ENCODE measurements at regions of chr2 and their contacts with region 1.

Region 1: DNA sequence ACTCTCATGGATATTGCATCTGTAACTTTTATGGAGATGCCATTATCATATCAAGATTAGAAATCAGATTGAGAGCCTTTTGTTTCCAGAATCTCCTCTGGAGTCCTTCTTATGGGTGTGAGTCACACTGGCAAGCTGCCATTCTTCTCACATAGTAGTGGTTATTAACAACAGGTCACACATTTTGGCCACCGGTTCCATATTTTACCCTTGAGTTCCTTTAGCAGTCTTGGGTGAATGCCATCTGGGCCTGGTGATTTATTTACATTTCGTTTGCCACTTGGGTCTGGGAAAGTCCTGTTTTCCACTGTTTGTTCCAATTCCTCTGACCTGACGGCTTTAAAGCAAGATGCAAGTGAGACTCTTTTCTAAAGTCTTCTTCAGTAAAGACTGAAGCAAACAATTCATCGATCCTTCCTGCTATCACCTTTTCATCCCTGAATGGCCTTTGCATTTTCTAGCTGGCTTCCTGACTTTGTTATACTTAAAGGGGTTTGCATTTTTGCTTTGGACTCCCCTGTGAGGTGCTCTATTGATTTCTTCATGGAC is 80.5 kb upstream of the CAVIN2 start:
- DNase-seq: peak; percentile 99
- H3K4me3 ChIP-seq: peak overlapping the region in 1 of 3 experiments; percentile 5
- H3K27ac ChIP-seq: peak overlapping the region; percentile 84
- H3K4me1 ChIP-seq: peaks cover 48% of the 10 kb centered on the region
- H3K27me3 ChIP-seq: no peaks in the 10 kb centered on the region
- CTCF ChIP-seq: no peak
- POLR2A ChIP-seq: peak; percentile 65

Region 2: GRCh38 chr2:191857259-191857805 is 70.1 kb before region 1 on chr2:
- CTCF ChIA-PET with region 1: interaction called, 3 read pairs
- POLR2A ChIA-PET with region 1: interaction called, 4 read pairs
- dilution Hi-C with region 1: no loop called
- intact Hi-C with region 1: loop called (anchors 1 kb)
- DNase-seq: peak; percentile 97
- H3K4me3 ChIP-seq: no peak overlapping the region
- H3K27ac ChIP-seq: peak overlapping the region; percentile 93
- H3K4me1 ChIP-seq: peaks cover 56% of the 10 kb centered on the region
- H3K27me3 ChIP-seq: no peaks in the 10 kb centered on the region
- CTCF ChIP-seq: no peak
- POLR2A ChIP-seq: peak; percentile 74

Region 3: GRCh38 chr2:191878576-191879279 is 48.7 kb before region 1 on chr2:
- CTCF ChIA-PET with region 1: no interaction called
- POLR2A ChIA-PET with region 1: no interaction called
- dilution Hi-C with region 1: no loop called
- intact Hi-C with region 1: loop called (anchors 1 kb)
- DNase-seq: peak; percentile 91
- H3K4me3 ChIP-seq: no peak overlapping the region
- H3K27ac ChIP-seq: peak overlapping the region; percentile 44
- H3K4me1 ChIP-seq: peaks cover 18% of the 10 kb centered on the region
- H3K27me3 ChIP-seq: no peaks in the 10 kb centered on the region
- CTCF ChIP-seq: no peak
- POLR2A ChIP-seq: no peak

Region 4: GRCh38 chr2:191910518-191910917 is 16.9 kb before region 1 on chr2:
- CTCF ChIA-PET with region 1: interaction called, 4 read pairs
- POLR2A ChIA-PET with region 1: no interaction called
- dilution Hi-C with region 1: no loop called
- intact Hi-C with region 1: loop called (anchors 1 kb)
- DNase-seq: peak; percentile 92
- H3K4me3 ChIP-seq: no peak overlapping the region
- H3K27ac ChIP-seq: peak overlapping the region; percentile 36
- H3K4me1 ChIP-seq: peaks cover 34% of the 10 kb centered on the region
- H3K27me3 ChIP-seq: no peaks in the 10 kb centered on the region
- CTCF ChIP-seq: no peak
- POLR2A ChIP-seq: no peak

Region 5: DNA sequence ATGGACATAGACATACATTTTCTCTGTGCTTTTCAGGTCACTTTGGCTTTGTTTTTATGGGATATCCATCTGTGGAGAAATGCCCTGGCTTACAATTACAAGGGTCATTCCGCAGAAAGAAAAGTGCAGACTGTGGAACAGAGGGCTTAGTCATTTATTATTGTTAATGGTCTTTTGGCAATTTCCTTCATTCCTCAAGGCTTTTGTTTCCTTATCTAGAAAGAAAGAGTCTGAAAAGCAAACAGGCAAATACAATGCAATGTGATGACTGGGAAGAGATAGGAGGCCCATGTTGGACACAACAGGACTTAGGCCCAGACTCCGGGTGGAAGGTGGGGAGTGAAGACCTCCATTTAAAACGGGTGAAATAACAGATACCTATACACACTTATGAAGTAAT is 49.0 kb after region 1 on chr2:
- CTCF ChIA-PET with region 1: no interaction called
- POLR2A ChIA-PET with region 1: no interaction called
- dilution Hi-C with region 1: no loop called
- intact Hi-C with region 1: loop called (anchors 1 kb)
- DNase-seq: peak; percentile 99
- H3K4me3 ChIP-seq: no peak overlapping the region
- H3K27ac ChIP-seq: peak overlapping the region; percentile 86
- H3K4me1 ChIP-seq: peaks cover 44% of the 10 kb centered on the region
- H3K27me3 ChIP-seq: no peaks in the 10 kb centered on the region
- CTCF ChIP-seq: no peak
- POLR2A ChIP-seq: peak; percentile 64

Region 6: DNA sequence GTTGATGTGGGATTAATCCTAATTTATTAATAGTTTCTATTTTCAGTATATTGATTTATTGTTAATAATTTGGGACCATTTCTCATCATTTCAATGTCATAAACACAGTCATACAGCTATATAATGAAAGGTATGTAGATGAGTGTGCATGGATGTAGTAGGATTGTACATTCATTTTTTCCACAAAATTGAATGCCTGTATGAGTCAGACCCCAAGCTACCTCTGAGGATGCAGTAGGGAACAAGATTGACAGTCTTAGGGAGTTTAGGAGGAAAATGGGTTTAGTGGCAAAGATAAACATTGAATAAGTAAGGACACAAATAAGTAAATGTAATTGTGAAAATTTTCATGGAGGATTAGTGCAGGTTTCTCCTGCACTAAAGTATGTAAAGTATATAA is 281.5 kb after region 1 on chr2:
- CTCF ChIA-PET with region 1: no interaction called
- POLR2A ChIA-PET with region 1: no interaction called
- dilution Hi-C with region 1: no loop called
- intact Hi-C with region 1: no loop called
- DNase-seq: no peak
- H3K4me3 ChIP-seq: no peak overlapping the region
- H3K27ac ChIP-seq: no peak overlapping the region
- H3K4me1 ChIP-seq: no peaks in the 10 kb centered on the region
- H3K27me3 ChIP-seq: peaks cover 0 to 2% of the 10 kb centered on the region in 2 experiments
- CTCF ChIP-seq: no peak
- POLR2A ChIP-seq: no peak

Measured in endothelial cell of umbilical vein (primary cell).